GM10248 (cell line): ENCODE measurements at regions of chr1 and their contacts with region 1.

Region 1: DNA sequence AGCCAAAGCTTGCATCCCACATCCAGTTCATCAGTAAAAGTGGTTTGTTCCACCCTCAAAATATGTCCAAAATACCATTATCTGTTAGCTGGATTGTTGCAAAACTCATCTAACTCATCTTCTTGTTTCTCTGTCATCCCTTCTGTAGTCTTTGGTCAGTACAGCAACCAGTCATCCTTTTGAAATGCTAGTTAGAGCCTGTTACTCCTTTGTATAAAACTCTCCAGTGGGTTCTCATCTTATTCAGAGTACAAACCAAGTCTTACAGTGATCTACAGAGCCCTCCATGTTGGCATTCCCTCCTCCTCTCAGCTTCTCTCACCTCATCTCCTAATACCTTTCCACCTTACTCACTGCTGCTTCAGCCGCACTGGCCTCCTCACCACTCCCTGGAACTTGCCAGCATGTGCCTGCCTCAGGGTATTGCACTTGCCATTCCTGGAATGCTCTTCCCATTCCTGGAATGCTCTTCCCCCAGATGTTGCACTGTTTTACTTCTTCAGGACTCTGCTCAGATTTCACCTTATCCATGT is 70.6 kb downstream of the LAMC1 start:
- DNase-seq: no peak
- CTCF ChIP-seq: no peak

Region 2: DNA sequence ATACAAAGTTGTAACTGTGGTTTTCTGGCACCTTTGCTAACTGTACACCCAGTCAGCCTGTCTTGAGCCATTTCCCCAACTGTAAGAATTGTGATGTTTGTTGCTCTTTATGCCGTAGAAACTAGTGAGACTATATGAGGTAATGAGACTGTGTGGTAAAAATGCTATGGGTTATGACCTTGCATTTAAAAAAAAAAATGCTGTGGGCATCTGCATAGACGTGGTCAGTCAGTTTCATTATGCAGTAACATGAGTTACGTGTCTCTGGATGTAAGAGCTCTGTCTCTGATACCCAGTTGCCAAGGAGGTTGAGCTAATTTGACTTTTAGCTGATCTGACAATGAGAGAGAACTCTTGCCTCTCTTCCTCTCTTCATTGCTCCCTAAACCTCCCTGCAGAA is 11.6 kb after region 1 on chr1:
- CTCF ChIA-PET with region 1: interaction called, 11 read pairs
- POLR2A ChIA-PET with region 1: no interaction called
- DNase-seq: no peak
- CTCF ChIP-seq: no peak